ENCODE measurements at regions of chr11 and their contacts with region 1.

Region 1: GRCh38 chr11:2992234-2992996 is at the start of gene NAP1L4:
- DNase-seq: peak; percentile 95
- H3K4me3 Mint-ChIP-seq: peak within 1 kb of the TSS; percentile 99
- H3K27ac Mint-ChIP-seq: peak within 1 kb of the TSS; percentile 99
- H3K4me1 Mint-ChIP-seq: peaks cover 30% of the 10 kb centered on the region
- H3K27me3 Mint-ChIP-seq: no peaks in the 10 kb centered on the region
- total RNA-seq, gene NAP1L4: 284 and 285 TPM in 2 replicates

Region 2: DNA sequence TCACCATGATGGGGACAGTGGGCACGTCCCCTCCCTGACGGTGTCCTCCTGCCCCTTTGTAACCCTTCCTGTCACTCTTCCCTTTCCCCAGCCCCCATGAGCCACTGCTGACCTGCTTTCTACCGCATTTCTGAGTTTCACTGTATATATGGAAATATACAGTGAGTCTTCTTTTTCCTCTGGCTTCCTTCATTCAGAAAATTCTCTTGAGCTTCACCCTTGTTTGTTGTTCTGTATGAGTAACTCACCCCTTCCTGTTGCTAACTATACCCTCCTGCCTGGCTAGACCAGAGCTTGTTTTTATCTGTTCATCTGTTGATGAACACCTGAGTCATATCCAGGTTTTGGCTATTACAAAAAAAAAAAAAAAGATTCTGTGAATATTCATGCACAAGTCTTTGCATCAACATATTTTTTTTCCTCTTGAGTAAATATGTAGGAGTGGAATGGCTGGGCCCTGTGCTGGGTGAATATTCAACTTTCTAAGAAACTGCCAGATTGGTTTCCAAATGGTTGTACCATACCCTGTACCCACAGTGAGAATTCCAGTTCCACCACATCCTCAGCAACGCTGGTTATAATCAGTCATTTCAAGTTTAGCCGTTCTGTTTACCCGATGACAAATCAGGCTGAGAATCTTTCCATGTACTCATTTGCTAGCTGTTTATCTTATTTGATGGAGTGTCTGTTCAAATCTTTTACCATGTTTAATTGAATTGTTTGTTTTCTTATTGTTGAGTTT is 915.2 kb before region 1 on chr11:
- intact Hi-C with region 1: loop called (anchors 2 kb)
- DNase-seq: peak; percentile 44
- H3K4me3 Mint-ChIP-seq: no peak overlapping the region
- H3K27ac Mint-ChIP-seq: peak overlapping the region; percentile 93
- H3K4me1 Mint-ChIP-seq: peaks cover 27% of the 10 kb centered on the region
- H3K27me3 Mint-ChIP-seq: peaks cover 4% of the 10 kb centered on the region

Region 3: DNA sequence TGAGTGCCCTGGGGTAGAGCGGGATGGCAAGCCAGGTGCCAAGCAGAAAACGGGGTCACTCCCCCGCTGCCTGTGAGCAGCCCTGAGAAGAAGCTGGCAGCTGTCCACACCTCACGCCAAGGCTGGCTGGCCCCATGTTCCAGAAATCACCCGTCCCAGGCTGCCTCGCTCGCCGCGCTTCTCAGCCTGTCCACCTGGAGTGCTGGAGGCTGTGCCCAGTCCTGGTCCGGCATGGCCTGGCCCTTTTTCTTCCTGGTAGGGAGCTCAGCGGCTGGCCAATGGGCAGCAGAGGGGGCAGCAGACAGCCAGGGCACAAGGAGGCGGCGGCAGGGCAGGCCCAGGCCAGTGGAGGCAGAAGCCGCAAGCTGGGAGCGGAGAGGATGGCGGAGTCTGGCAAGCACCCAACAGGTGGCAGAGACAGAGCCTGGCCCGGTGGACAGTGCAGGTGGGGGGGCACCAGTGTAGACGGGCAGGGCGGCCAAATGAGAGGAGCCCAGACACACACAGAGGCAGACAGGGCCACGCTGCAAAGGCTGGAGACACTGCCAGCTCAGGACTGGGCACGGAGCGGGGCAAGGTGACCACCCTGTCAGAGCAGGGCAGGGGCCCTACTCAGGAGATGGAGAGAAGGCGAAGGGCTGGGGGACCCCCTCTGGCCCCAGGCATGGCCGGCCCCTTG is 783.6 kb before region 1 on chr11:
- intact Hi-C with region 1: no loop called
- DNase-seq: no peak
- H3K4me3 Mint-ChIP-seq: no peak overlapping the region
- H3K27ac Mint-ChIP-seq: no peak overlapping the region
- H3K4me1 Mint-ChIP-seq: peaks cover 6% of the 10 kb centered on the region
- H3K27me3 Mint-ChIP-seq: no peaks in the 10 kb centered on the region

Region 4: GRCh38 chr11:2741377-2742131 is 250.9 kb before region 1 on chr11:
- intact Hi-C with region 1: no loop called
- DNase-seq: no peak
- H3K4me3 Mint-ChIP-seq: no peak overlapping the region
- H3K27ac Mint-ChIP-seq: no peak overlapping the region
- H3K4me1 Mint-ChIP-seq: no peaks in the 10 kb centered on the region
- H3K27me3 Mint-ChIP-seq: no peaks in the 10 kb centered on the region

Region 5: DNA sequence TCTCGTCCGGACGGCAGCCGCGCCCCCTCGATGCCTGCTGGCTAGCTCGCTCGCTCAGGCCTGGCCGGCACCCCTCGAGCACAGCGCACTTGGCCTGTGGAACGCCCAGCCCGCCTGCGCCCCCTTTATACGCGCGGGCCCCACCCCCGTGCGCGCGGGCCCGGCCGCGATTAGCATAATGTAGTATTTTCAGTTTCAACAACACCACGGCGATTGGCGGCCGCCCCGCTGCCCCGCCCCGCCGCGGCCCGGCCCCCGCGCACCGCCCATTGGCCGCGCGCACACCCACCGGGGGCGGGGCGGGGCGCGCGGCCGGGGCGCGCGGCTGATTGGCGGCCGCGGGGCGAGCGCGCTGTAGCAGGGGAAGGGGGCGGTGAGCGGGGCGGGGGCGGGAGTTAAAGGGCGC is 106.7 kb before region 1 on chr11 and contains the start of gene CDKN1C:
- intact Hi-C with region 1: loop called (anchors 5 kb)
- DNase-seq: peak; percentile 77
- H3K4me3 Mint-ChIP-seq: peak within 1 kb of the TSS; percentile 88
- H3K27ac Mint-ChIP-seq: peak within 1 kb of the TSS; percentile 58
- H3K4me1 Mint-ChIP-seq: no peaks in the 10 kb centered on the region
- H3K27me3 Mint-ChIP-seq: peaks cover 21% of the 10 kb centered on the region
- total RNA-seq, gene CDKN1C: 3.1 and 3.9 TPM in 2 replicates

Region 6: GRCh38 chr11:2930704-2931428 is 61.5 kb before region 1 on chr11:
- intact Hi-C with region 1: loop called (anchors 1 kb)
- DNase-seq: no peak
- H3K4me3 Mint-ChIP-seq: peak overlapping the region; percentile 78
- H3K27ac Mint-ChIP-seq: peak overlapping the region; percentile 77
- H3K4me1 Mint-ChIP-seq: peaks cover 15% of the 10 kb centered on the region
- H3K27me3 Mint-ChIP-seq: peaks cover 12% of the 10 kb centered on the region

Region 7: GRCh38 chr11:3014057-3014938 is 21.9 kb after region 1 on chr11:
- intact Hi-C with region 1: loop called (anchors 1 kb)
- DNase-seq: peak; percentile 72
- H3K4me3 Mint-ChIP-seq: peak overlapping the region; percentile 63
- H3K27ac Mint-ChIP-seq: peak overlapping the region; percentile 90
- H3K4me1 Mint-ChIP-seq: peaks cover 41% of the 10 kb centered on the region
- H3K27me3 Mint-ChIP-seq: no peaks in the 10 kb centered on the region

Region 8: DNA sequence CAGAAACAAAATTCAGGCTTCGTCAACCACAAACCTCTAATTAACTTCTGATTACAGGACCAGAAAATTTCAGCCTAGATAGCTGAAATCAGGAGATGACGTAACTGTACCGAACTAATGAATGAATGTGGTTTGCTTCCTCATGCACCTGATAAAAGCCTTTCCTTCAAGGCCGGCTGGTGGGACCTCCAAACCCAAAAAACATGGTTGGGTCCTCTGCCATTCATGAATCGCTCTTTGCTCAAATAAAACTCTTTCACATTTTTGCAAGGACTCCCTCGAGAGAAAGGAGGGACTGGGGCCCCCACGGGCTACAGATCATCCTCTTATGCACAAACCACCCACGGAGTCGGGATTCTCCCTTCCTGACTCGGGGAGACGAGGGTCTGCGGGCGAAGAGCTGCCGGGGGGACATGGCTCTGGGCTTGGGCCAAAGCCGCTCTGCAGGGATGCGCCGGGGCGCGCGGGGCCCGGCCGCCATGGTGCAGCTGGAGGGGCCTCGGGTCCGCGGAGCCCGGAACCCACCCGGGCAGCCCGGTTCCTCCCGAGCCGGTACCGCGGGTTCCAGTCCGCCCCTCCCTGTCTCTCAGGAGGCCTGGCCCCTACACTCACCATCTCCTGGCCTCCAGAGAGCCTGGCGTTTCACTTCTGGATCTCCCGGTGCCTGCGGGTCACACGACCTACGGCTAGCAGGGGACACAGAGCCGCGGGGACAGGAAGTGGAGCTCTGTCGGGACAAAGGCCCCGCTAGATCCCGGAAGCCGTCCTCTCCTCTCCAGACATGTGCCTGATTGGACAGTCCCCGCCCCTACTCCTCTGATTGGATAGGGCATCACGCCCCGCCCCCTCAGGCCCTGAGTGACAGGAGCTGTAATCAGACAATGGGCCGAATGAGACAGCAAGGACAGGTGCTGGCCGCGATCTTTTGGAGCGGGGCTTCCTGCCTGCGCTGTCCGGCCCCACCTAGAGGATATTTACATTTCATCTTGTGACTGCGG is 386.3 kb after region 1 on chr11 and contains the start of gene ZNF195:
- intact Hi-C with region 1: loop called (anchors 2 kb)
- DNase-seq: peak; percentile 98
- H3K4me3 Mint-ChIP-seq: peak within 1 kb of the TSS; percentile 96
- H3K27ac Mint-ChIP-seq: peak within 1 kb of the TSS; percentile 94
- H3K4me1 Mint-ChIP-seq: peaks cover 30% of the 10 kb centered on the region
- H3K27me3 Mint-ChIP-seq: no peaks in the 10 kb centered on the region
- total RNA-seq, gene ZNF195: 41.2 and 42.8 TPM in 2 replicates

Measured in activated T-helper 1 cell treated with anti-CD3 and anti-CD28 coated beads, Interleukin-12 subunit alpha, Interleukin-12 subunit beta, Interleukin-2, Interleukin-4 antibody, amounts not matched to agents 30 ng/mL and 10 ng/mL and 1 ng/mL, durations not matched to agents 14 hours and 24 hours and 36 hours (primary cell).